ENCODE measurements at regions of chr3 and their contacts with region 1.

Region 1: DNA sequence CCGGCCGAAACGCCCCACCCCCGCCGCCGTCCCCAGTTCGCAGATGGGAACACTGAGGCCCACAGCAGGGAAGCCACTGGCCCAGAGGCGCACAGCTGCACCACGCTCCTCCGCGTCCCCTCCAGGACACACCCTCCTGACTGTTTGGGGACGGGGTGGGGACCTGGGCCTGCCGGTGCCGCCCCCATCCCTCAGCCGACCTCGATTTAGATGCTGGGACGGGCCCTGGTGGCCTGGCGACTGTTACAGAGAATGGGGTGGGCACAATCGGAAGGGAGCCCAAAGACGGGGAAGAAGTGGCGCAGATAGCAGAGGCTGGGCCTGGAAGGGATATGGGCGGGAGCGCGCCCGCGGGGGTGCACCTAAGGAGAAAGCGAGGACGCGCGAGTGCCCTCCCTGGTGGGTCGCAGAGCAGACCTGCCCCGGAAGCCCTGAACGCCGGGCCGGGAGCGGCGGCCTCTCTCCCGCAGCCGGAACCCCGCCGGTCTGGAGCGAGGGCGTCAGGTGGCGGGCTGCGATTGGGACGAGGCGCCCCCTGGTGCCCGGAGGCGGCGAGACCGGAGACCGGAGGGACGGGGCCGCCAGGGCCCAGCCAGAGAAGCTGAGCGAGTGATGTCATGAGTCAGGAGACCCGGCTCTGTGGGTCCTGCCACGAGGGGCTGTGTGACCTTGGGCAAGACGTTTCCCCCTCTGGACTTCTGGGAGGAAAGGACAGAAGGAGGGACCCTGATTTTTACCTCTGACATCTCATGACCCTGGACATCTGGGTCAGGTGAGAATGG is 78.4 kb downstream of the IQSEC1 start:
- DNase-seq: peak; percentile 94
- ATAC-seq: peak; percentile 76

Region 2: DNA sequence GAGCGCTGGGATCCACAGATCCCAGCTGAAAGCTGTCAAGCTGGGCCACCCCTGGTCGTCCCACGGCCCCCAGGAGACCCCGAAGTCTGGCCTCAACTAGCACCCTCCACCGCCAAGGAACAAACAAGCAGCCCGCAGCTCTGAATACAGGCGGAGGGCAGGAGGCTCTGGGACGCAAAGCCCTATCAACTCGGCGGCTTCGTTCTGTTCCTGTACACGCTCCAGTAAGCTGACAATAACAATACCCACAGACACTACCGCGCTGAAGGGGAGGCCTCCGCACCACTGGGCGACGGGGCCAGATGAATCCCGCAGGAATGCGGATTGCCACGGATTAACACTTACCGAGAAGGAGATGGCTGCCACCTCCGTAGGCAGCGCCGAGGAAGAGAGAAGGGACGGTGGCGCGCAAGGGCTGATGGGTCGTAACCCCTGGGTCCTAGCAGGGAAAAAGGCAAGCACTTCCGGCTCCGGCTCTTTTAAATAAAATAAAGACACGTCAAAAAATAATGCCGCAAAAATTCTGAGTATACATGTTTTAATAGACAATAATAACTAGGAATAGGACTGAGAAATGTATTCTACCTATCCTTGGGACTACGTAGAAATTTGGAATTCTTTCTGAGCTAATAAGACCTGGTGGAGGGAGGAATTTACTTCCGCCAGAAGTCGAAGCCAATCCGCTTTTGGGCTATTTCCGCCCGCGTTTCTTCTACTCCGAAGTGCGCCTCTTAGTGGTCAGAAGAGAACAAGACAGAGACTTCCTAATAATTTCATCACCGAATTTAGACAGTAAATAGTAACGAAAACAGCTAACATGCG is 153.4 kb before region 1 on chr3 and contains the start of gene RPL32:
- intact Hi-C with region 1: no loop called
- DNase-seq: peak; percentile 94
- ATAC-seq: peak; percentile 96
- total RNA-seq, gene RPL32: 953 TPM

Region 3: GRCh38 chr3:12868039-12869034 is 126.5 kb before region 1 on chr3:
- intact Hi-C with region 1: loop called (anchors 5 kb)
- DNase-seq: peak; percentile 91
- ATAC-seq: peak; percentile 95

Region 4: GRCh38 chr3:12934431-12934830 is 60.4 kb before region 1 on chr3:
- intact Hi-C with region 1: loop called (anchors 5 kb)
- DNase-seq: no peak
- ATAC-seq: peak; percentile 46

Region 5: DNA sequence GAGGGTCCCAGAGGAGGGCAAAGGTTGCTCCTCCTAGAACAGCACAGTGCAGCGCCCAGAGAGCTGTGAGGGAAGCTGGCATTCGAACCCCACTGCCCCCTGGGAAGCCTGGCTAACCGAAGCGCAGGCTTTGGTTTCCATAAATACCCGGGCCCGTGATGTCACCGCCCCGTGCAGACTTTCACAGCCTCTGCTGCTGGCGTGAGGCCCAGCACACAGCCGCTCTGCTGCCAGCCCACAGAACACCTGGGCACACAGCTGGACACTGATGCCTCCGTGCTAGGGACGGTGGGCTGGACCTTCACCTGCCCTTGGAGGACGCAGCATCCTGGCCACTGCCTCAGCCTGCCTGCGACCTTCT is 77.4 kb after region 1 on chr3:
- intact Hi-C with region 1: loop called (anchors 1 kb)
- DNase-seq: peak; percentile 82
- ATAC-seq: peak; percentile 62

Measured in Right ventricle myocardium inferior (tissue), 1 donor.